CD4-positive, alpha-beta memory T cell (primary cell): ENCODE measurements at regions of chr7 and their contacts with region 1.

Region 1: DNA sequence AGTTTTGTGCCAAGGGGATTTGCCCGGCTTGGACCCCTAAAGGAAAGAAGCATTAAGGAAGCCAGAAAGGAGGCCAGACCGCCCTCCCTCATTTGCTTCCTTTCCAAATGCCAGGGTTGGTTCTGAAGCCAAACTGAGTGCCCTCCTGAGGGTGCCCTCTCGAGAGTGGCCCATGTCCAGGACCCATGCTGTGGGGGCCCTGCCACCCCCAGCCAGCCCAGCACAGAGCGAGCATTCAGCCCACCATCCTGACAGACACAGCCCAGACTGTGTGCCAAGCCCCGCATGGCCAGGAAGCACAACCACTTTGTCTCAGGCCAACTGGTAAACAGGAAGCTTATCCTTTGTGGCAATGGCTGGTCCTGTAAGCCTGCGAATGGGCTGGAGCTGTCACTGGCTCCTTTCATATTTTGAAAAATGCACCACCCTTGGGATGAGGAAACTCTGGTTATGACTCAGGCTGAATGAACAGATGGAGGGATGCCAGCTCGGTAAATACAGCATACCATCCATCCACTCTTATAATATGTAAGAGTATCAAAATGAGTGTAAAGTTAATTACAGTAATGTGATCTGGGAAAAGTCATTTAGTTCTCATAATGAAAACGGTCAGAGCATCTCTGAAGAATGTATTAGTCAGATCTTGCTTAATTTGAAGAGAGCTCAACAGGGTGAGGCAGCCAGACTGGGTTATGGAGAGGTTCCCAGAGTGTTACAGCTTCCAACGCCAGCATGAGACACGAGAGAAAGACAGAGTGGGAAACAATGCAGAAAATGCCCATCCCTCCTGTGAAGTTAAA is 65.0 kb downstream of the STK17A start:
- DNase-seq: peak in 3 of 5 donors; percentile 19 to 68 (median 24)
- H3K4me3 ChIP-seq: peak overlapping the region; percentile 3 to 64
- H3K4me3 Mint-ChIP-seq: peak overlapping the region; percentile 71 to 90 (median 82)
- H3K27ac ChIP-seq: peak overlapping the region; percentile 70
- H3K27ac Mint-ChIP-seq: peak overlapping the region; percentile 84 to 97 (median 91)
- H3K4me1 ChIP-seq: peaks cover 99% of the 10 kb centered on the region
- H3K4me1 Mint-ChIP-seq: peaks cover 78 to 99% (median 88%) of the 10 kb centered on the region in 4 donors
- H3K27me3 ChIP-seq: no peaks in the 10 kb centered on the region
- H3K27me3 Mint-ChIP-seq: no peaks in the 10 kb centered on the region

Region 2: GRCh38 chr7:43385856-43386255 is 262.0 kb before region 1 on chr7:
- CTCF ChIA-PET with region 1: no interaction called
- POLR2A ChIA-PET with region 1: no interaction called
- intact Hi-C with region 1: no loop called
- DNase-seq: no peak
- H3K4me3 ChIP-seq: no peak overlapping the region
- H3K4me3 Mint-ChIP-seq: no peak overlapping the region
- H3K27ac ChIP-seq: no peak overlapping the region
- H3K27ac Mint-ChIP-seq: no peak overlapping the region
- H3K4me1 ChIP-seq: no peaks in the 10 kb centered on the region
- H3K4me1 Mint-ChIP-seq: peaks cover 2 to 5% (median 4%) of the 10 kb centered on the region in 4 donors
- H3K27me3 ChIP-seq: no peaks in the 10 kb centered on the region
- H3K27me3 Mint-ChIP-seq: peaks cover 4 to 20% of the 10 kb centered on the region in 2 donors

Region 3: DNA sequence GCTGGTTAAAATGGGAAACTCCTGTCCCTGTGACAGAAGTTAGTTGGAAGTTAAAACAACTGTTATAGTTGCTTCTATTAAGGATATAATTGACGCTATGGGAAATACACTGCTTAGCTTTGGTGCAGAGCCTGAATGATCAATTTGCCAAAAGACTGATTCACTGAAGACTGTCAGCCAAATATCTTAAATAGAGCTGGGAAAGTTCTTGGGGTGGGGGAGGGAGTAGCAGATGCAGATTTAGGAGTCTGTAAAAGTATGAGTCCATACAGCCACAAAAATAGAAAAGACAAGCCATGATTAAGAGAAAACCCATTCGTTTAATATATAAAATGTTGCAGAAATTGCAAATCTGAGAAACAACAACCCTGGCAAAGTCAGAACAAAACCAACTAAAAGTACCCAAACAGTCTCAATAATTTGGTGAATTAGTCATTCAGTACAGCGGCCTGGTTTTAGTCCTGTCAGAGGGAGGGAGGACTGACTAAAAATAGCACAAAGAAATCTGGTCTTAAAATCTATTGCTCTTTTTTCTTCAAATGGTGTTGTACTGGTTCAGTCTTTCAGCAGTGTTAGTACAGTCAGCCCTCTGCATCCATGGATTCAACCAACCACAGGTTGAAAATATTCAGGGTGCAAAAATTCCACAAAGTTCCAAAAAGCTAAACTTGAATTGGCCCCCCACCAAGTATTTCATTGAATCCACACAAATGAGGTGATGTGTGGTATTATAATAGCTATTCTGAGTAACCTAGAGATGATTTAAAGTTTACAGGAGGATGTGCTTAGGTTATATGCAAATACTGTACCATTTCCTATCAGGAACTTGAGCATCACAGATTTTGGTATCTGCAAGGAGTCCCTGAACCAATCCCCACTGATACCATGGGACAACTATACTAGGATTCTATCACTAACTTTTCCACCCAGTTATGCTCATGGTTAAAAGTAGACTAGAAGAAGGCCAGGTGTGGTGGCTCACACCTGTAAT is 35.0 kb before region 1 on chr7:
- CTCF ChIA-PET with region 1: no interaction called
- POLR2A ChIA-PET with region 1: interaction called, 20 read pairs
- intact Hi-C with region 1: loop called (anchors 5 kb)
- DNase-seq: no peak
- H3K4me3 ChIP-seq: no peak overlapping the region
- H3K4me3 Mint-ChIP-seq: peak overlapping the region in 7 of 8 donors; percentile 5 to 83 (median 51)
- H3K27ac ChIP-seq: peak overlapping the region; percentile 11
- H3K27ac Mint-ChIP-seq: peak overlapping the region; percentile 86 to 90 (median 87)
- H3K4me1 ChIP-seq: peaks cover 90% of the 10 kb centered on the region
- H3K4me1 Mint-ChIP-seq: peaks cover 43 to 64% (median 48%) of the 10 kb centered on the region in 4 donors
- H3K27me3 ChIP-seq: no peaks in the 10 kb centered on the region
- H3K27me3 Mint-ChIP-seq: no peaks in the 10 kb centered on the region

Region 4: GRCh38 chr7:43658718-43659548 is 11.1 kb after region 1 on chr7:
- CTCF ChIA-PET with region 1: no interaction called
- POLR2A ChIA-PET with region 1: interaction called, 33 read pairs
- intact Hi-C with region 1: loop called (anchors 1 kb)
- DNase-seq: no peak
- H3K4me3 ChIP-seq: no peak overlapping the region
- H3K4me3 Mint-ChIP-seq: peak overlapping the region in 7 of 8 donors; percentile 43 to 83 (median 66)
- H3K27ac ChIP-seq: peak overlapping the region; percentile 21
- H3K27ac Mint-ChIP-seq: peak overlapping the region; percentile 79 to 94 (median 92)
- H3K4me1 ChIP-seq: peaks cover 39% of the 10 kb centered on the region
- H3K4me1 Mint-ChIP-seq: peaks cover 34 to 58% (median 49%) of the 10 kb centered on the region in 4 donors
- H3K27me3 ChIP-seq: no peaks in the 10 kb centered on the region
- H3K27me3 Mint-ChIP-seq: no peaks in the 10 kb centered on the region

Region 5: GRCh38 chr7:43679210-43680068 is 31.6 kb after region 1 on chr7:
- CTCF ChIA-PET with region 1: interaction called, 7 read pairs
- POLR2A ChIA-PET with region 1: interaction called, 11 read pairs
- intact Hi-C with region 1: loop called (anchors 5 kb)
- DNase-seq: no peak
- H3K4me3 ChIP-seq: no peak overlapping the region
- H3K4me3 Mint-ChIP-seq: peak overlapping the region in 7 of 8 donors; percentile 5 to 71 (median 65)
- H3K27ac ChIP-seq: no peak overlapping the region
- H3K27ac Mint-ChIP-seq: peak overlapping the region; percentile 48 to 84 (median 73)
- H3K4me1 ChIP-seq: peaks cover 56% of the 10 kb centered on the region
- H3K4me1 Mint-ChIP-seq: peaks cover 58 to 83% (median 64%) of the 10 kb centered on the region in 4 donors
- H3K27me3 ChIP-seq: no peaks in the 10 kb centered on the region
- H3K27me3 Mint-ChIP-seq: no peaks in the 10 kb centered on the region

Region 6: DNA sequence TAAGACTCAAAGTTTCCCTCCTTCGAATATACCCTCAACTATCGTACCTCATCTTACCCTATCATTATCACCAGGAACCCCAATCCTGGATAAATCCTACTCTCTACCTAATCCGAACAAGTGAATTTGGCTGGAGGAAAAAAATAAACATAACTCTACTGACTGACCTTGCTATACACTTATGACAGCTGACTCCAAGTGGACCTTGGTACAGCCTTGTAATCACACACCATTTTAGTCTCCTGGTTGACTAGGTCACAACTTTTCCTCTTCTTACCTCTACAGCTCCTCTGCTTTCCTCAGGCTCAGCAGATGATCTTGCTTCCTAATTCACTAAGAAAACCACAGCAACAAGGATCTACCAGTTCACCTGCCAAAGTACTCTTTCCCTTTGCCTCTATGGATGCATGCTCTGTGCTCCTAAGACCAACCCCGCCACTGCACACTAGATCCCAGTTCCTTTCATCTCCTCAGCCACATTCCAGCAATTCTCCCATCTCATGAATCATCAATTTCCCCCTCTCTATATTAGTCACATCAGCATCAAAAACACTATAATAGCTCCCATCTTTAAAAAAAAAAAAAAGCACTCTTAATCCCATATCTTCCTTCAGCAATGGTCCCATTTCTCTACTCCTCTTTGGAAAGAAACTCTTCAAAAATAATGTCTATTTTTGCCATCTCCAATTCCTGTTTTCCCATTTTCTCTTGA is 46.0 kb after region 1 on chr7:
- CTCF ChIA-PET with region 1: interaction called, 70 read pairs
- POLR2A ChIA-PET with region 1: interaction called, 57 read pairs
- intact Hi-C with region 1: no loop called
- DNase-seq: no peak
- H3K4me3 ChIP-seq: no peak overlapping the region
- H3K4me3 Mint-ChIP-seq: no peak overlapping the region
- H3K27ac ChIP-seq: no peak overlapping the region
- H3K27ac Mint-ChIP-seq: no peak overlapping the region
- H3K4me1 ChIP-seq: peaks cover 27% of the 10 kb centered on the region
- H3K4me1 Mint-ChIP-seq: peaks cover 27 to 42% (median 34%) of the 10 kb centered on the region in 4 donors
- H3K27me3 ChIP-seq: no peaks in the 10 kb centered on the region
- H3K27me3 Mint-ChIP-seq: no peaks in the 10 kb centered on the region